Activated CD8-positive, alpha-beta T cell treated with anti-CD3 and anti-CD28 coated beads for 36 hours (primary cell): ENCODE measurements at regions of chr14 and their contacts with region 1.

Region 1: DNA sequence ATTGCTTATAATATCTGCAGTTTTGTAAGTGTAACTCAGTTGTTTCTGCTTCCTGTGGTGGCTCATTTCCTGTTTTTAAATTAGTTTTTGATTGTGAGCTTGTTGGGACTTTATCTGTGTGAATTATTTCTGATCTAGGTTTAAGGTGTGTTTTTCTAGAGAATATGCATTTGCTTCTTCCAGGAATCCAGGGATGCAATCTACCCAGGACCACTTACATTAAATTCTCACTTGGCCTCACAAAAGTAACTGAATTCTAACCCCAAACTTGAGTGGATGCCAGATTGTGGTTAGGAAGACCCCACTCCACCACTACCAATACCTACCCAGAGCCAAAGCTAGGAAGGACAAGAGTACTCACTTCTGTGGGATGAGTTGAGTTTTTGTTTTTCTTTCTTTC is 11.9 kb downstream of the STYX start:
- DNase-seq: no peak
- ATAC-seq: peak; percentile 26
- H3K4me3 Mint-ChIP-seq: peak overlapping the region; percentile 68
- H3K27ac Mint-ChIP-seq: peak overlapping the region; percentile 93
- H3K4me1 Mint-ChIP-seq: peaks cover 67% of the 10 kb centered on the region
- H3K27me3 Mint-ChIP-seq: no peaks in the 10 kb centered on the region
- CTCF ChIP-seq: no peak

Region 2: DNA sequence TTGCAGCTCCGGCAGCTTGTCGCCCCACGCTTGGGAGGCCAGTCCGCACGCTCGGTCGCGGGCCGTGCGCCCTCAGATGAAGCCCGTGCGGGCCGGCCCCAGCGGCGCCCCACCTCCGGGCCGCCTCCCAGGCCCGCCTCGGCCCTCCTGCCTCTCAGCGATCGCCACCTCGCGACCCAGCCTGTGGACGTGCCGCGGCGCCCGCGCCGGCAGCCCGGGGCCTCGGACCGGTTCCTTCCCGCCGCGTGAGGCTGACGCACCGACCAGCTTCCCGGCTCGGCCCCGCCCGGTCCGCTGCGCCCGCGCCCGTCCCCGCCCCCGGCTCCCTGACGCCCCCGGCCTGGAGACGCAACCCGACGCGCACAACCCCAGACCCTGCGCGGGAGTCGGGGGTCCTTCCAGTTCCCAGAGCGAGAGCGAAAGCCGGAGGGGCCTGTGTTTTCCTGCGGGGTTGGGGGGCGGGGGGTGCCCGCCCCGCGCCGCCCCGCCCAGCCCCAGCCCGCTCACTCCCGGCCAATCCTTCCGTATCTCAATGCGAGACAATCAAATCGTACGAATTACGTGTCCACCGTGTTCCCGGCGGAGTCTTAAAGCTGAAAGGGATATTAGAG is 46.3 kb before region 1 on chr14 and contains the start of gene ERO1A:
- CTCF ChIA-PET with region 1: no interaction called
- POLR2A ChIA-PET with region 1: interaction called, 11 read pairs
- intact Hi-C with region 1: no loop called
- DNase-seq: peak; percentile 79
- ATAC-seq: peak; percentile 82
- H3K4me3 Mint-ChIP-seq: peak within 1 kb of the TSS; percentile 91
- H3K27ac Mint-ChIP-seq: peak within 1 kb of the TSS; percentile 94
- H3K4me1 Mint-ChIP-seq: peaks cover 36% of the 10 kb centered on the region
- H3K27me3 Mint-ChIP-seq: no peaks in the 10 kb centered on the region
- CTCF ChIP-seq: no peak
- total RNA-seq, gene ERO1A: 187 to 202 TPM

Region 3: DNA sequence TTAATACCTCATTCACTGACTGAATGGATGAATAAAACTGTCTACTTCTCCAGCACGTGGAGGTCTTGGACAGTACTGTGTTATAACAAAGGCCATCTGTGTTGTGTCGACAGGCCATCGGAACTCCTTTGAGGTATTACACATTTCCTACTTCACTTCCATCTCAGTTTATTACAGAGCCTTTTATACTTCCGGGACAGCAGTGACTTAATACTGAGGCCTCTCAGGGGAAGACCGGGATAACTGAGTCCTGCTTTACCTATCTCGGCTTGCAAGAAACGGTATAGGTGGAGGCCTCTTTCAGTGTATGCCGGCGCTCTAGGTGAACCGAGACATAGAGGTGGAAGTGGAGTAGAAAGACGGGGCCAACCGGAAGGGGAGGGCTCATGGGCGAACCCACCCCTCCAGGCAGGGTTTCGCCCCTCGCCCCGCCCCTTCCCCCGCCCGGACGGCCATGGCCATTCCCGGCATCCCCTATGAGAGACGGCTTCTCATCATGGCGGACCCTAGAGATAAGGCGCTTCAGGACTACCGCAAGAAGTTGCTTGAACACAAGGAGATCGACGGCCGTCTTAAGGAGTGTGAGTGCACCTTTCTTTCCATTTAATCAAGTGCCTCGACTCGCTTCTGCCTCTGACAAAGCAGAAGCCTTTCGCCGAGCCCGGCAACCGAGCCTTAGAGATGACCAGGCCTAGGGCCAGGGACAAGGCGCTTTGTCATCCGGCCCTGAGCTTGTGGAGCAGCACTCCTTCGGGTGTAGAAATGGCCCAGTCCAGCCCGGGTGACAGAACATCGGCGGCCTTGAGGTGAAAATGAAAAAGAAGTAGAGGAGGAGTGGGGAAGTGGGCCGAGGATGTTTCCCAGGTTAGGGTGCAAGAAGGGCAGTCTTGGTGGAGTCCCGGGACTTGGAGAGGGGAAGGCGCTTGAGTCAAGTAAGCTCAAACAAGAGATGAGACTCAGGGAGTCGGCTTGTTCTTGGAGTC is 34.9 kb before region 1 on chr14 and contains the start of gene PSMC6:
- CTCF ChIA-PET with region 1: interaction called, 3 read pairs
- POLR2A ChIA-PET with region 1: no interaction called
- intact Hi-C with region 1: loop called (anchors 2 kb)
- DNase-seq: peak; percentile 97
- ATAC-seq: peak; percentile 98
- H3K4me3 Mint-ChIP-seq: peak within 1 kb of the TSS; percentile 96
- H3K27ac Mint-ChIP-seq: peak within 1 kb of the TSS; percentile 97
- H3K4me1 Mint-ChIP-seq: peaks cover 44% of the 10 kb centered on the region
- H3K27me3 Mint-ChIP-seq: no peaks in the 10 kb centered on the region
- CTCF ChIP-seq: no peak
- total RNA-seq, gene PSMC6: 104 to 105 TPM

Region 4: GRCh38 chr14:52729925-52730667 is 11.8 kb before region 1 on chr14 and contains the start of gene STYX:
- CTCF ChIA-PET with region 1: interaction called, 8 read pairs
- POLR2A ChIA-PET with region 1: interaction called, 13 read pairs
- intact Hi-C with region 1: no loop called
- DNase-seq: peak; percentile 99
- ATAC-seq: peak; percentile 96
- H3K4me3 Mint-ChIP-seq: peak within 1 kb of the TSS; percentile 96
- H3K27ac Mint-ChIP-seq: peak within 1 kb of the TSS; percentile 92
- H3K4me1 Mint-ChIP-seq: peaks cover 35% of the 10 kb centered on the region
- H3K27me3 Mint-ChIP-seq: no peaks in the 10 kb centered on the region
- CTCF ChIP-seq: no peak
- total RNA-seq, gene STYX: 13.0 to 13.2 TPM